ENCODE measurements at regions of chr11 and their contacts with region 1.

Region 1: DNA sequence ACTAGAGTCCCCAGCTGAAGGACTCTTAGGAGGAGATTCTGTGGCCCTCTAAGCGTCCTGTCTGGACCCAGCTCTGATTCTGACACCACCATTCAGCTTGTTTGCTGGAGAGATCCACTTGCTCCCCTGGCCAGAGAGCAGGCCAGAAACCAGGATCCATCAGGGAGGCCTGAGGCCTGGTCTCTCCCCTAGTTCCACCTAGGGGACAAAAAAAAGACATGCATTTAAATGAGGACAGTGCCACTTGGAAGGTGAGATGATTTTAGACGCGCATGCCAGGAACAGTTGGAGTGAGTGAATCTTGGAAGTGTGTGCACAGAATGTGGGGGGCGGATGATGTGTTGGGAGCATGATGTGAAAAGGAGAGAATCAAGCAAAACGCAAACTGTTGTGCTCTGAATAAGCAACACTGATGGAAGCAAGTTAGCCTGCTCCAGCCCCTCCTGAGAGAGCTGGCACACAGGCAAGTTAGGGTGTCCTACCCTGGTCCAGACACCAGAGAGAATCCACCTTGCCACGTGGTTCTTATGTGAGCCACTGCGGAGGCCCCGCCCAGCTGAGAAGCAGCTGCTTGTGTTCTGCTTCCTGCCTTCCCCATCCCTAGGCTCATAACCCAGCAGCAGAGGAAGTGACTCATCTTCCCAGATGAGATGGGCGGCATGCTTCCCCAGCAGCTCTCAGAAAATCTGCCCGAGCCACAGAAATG is 8.0 kb upstream of the SLCO2B1 start:
- DNase-seq: peak in 8 of 9 experiments; percentile 58 to 87 (median 76)
- ATAC-seq: peak; percentile 89
- H3K4me3 ChIP-seq: no peak overlapping the region
- H3K4me3 Mint-ChIP-seq: peak overlapping the region; percentile 41
- H3K27ac ChIP-seq: peak overlapping the region in 1 of 2 experiments; percentile 43
- H3K27ac Mint-ChIP-seq: peak overlapping the region; percentile 79
- H3K4me1 ChIP-seq: peaks cover 30% of the 10 kb centered on the region
- H3K4me1 Mint-ChIP-seq: peaks cover 36% of the 10 kb centered on the region
- H3K27me3 ChIP-seq: no peaks in the 10 kb centered on the region
- H3K27me3 Mint-ChIP-seq: no peaks in the 10 kb centered on the region
- CTCF ChIP-seq: no peak

Region 2: DNA sequence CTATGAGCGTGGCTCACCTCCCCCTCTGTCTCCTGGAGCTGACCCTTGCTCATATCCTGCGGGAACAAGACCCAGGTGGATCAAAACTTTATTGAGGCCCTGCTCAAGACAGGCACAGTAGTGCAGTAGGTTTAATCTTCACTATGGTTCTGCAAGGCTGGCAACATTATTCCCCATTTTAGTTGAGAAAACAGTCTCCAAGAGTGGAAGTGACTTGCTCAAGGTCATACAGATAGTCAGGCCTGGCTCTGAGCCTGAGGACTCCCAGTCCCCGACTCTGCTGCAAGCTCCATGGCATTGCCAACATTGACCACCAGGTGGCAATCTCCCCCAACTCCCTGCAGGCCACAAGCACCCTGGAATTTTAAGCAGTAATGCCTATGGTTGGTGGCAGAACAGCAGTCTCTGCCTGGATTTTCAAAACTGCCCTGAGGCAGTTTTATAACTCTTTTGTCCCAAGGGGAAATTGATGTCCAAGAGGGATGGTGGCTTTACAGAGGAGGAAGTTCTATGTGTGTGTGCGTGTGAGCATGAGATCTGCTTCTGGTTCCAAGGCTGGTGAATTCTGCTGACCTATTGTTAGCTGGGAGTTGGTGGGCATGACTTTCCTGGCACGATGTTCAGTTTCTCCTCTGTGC is 120.0 kb before region 1 on chr11:
- CTCF ChIA-PET with region 1: interaction called, 9 read pairs
- POLR2A ChIA-PET with region 1: no interaction called
- intact Hi-C with region 1: loop called in 1 of 2 experiments (anchors 1 kb)
- DNase-seq: peak; percentile 55 to 82 (median 71)
- ATAC-seq: peak; percentile 87
- H3K4me3 ChIP-seq: no peak overlapping the region
- H3K4me3 Mint-ChIP-seq: no peak overlapping the region
- H3K27ac ChIP-seq: no peak overlapping the region
- H3K27ac Mint-ChIP-seq: no peak overlapping the region
- H3K4me1 ChIP-seq: no peaks in the 10 kb centered on the region
- H3K4me1 Mint-ChIP-seq: no peaks in the 10 kb centered on the region
- H3K27me3 ChIP-seq: no peaks in the 10 kb centered on the region
- H3K27me3 Mint-ChIP-seq: no peaks in the 10 kb centered on the region
- CTCF ChIP-seq: peak; percentile 95

Region 3: GRCh38 chr11:75100314-75100713 is 42.6 kb before region 1 on chr11:
- CTCF ChIA-PET with region 1: no interaction called
- POLR2A ChIA-PET with region 1: no interaction called
- intact Hi-C with region 1: no loop called
- DNase-seq: peak in 1 of 9 experiments; percentile 13
- ATAC-seq: no peak
- H3K4me3 ChIP-seq: no peak overlapping the region
- H3K4me3 Mint-ChIP-seq: no peak overlapping the region
- H3K27ac ChIP-seq: no peak overlapping the region
- H3K27ac Mint-ChIP-seq: no peak overlapping the region
- H3K4me1 ChIP-seq: no peaks in the 10 kb centered on the region
- H3K4me1 Mint-ChIP-seq: no peaks in the 10 kb centered on the region
- H3K27me3 ChIP-seq: no peaks in the 10 kb centered on the region
- H3K27me3 Mint-ChIP-seq: peaks cover 41% of the 10 kb centered on the region
- CTCF ChIP-seq: no peak

Region 4: DNA sequence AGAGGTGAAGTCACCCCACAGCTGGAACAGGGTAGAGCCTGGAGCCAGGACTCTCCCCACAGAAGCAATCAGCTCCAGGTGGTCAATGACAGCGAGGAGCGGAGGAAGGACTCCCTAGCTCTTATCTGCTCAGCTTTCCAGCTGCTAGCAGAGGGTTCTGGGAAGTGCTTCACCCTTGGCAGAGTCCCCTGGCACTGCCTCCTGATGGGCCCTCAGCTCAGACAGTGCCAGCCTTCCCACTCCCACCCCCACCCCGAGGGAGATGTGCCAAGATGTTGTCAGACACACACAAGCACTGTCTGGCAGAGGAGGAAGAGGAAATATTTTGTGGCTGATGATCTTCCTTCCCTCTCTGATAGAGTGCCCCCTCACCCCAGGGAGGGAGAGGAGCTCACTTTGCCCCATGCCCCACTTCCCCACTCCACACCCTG is 52.3 kb after region 1 on chr11:
- CTCF ChIA-PET with region 1: interaction called, 11 read pairs
- POLR2A ChIA-PET with region 1: no interaction called
- intact Hi-C with region 1: no loop called
- DNase-seq: no peak
- ATAC-seq: no peak
- H3K4me3 ChIP-seq: no peak overlapping the region
- H3K4me3 Mint-ChIP-seq: no peak overlapping the region
- H3K27ac ChIP-seq: no peak overlapping the region
- H3K27ac Mint-ChIP-seq: no peak overlapping the region
- H3K4me1 ChIP-seq: no peaks in the 10 kb centered on the region
- H3K4me1 Mint-ChIP-seq: no peaks in the 10 kb centered on the region
- H3K27me3 ChIP-seq: peaks cover 0 to 3% of the 10 kb centered on the region in 2 experiments
- H3K27me3 Mint-ChIP-seq: peaks cover 3% of the 10 kb centered on the region
- CTCF ChIP-seq: no peak

Region 5: DNA sequence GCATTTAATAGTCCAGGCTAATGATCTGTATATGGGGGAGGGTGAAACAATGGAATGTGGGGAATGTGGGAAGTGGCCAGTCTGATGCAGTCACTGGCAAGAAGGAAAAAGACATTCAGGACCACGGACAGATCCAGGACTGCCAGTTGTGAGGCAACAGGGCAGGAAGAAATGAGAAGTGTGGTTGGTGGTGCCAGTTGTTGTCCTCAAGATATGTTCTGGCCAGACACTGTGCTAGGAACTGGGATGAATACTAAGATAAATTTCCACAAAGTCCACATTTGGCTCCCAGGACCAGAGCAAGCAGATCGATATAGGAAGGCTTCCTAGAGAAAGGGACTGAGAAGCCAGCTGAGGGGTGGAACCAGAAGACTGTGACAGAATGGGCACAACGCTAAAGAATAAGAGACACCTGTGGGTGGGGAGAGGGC is 90.9 kb after region 1 on chr11:
- CTCF ChIA-PET with region 1: interaction called, 625 read pairs
- POLR2A ChIA-PET with region 1: no interaction called
- intact Hi-C with region 1: no loop called
- DNase-seq: peak in 4 of 9 experiments; percentile 20 to 42 (median 34)
- ATAC-seq: no peak
- H3K4me3 ChIP-seq: no peak overlapping the region
- H3K4me3 Mint-ChIP-seq: no peak overlapping the region
- H3K27ac ChIP-seq: no peak overlapping the region
- H3K27ac Mint-ChIP-seq: no peak overlapping the region
- H3K4me1 ChIP-seq: no peaks in the 10 kb centered on the region
- H3K4me1 Mint-ChIP-seq: no peaks in the 10 kb centered on the region
- H3K27me3 ChIP-seq: no peaks in the 10 kb centered on the region
- H3K27me3 Mint-ChIP-seq: peaks cover 40% of the 10 kb centered on the region
- CTCF ChIP-seq: no peak

Region 6: DNA sequence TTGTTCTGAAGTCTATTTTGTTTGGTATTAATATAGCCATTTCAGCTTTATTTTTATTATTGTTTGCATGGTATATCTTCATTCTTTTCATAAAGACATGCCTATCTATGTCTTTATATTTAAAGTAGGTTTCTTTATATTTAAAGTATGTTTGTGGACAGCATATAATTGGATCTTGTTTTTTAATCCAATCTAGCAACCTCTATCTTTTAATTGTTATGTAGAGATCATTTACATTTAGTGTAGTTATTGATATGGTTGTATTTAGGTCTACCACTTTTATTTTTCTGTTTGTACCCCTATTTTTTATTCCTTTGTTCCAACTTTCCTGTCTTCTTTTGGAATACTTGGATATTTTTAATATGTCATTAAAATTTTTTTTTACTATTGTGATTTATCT is 111.5 kb after region 1 on chr11:
- CTCF ChIA-PET with region 1: interaction called, 625 read pairs
- POLR2A ChIA-PET with region 1: interaction called, 4 read pairs
- intact Hi-C with region 1: no loop called
- DNase-seq: no peak
- ATAC-seq: no peak
- H3K4me3 ChIP-seq: no peak overlapping the region
- H3K4me3 Mint-ChIP-seq: no peak overlapping the region
- H3K27ac ChIP-seq: no peak overlapping the region
- H3K27ac Mint-ChIP-seq: no peak overlapping the region
- H3K4me1 ChIP-seq: peaks cover 6% of the 10 kb centered on the region
- H3K4me1 Mint-ChIP-seq: peaks cover 7% of the 10 kb centered on the region
- H3K27me3 ChIP-seq: peaks cover 0 to 4% of the 10 kb centered on the region in 2 experiments
- H3K27me3 Mint-ChIP-seq: peaks cover 2% of the 10 kb centered on the region
- CTCF ChIP-seq: no peak

Region 7: DNA sequence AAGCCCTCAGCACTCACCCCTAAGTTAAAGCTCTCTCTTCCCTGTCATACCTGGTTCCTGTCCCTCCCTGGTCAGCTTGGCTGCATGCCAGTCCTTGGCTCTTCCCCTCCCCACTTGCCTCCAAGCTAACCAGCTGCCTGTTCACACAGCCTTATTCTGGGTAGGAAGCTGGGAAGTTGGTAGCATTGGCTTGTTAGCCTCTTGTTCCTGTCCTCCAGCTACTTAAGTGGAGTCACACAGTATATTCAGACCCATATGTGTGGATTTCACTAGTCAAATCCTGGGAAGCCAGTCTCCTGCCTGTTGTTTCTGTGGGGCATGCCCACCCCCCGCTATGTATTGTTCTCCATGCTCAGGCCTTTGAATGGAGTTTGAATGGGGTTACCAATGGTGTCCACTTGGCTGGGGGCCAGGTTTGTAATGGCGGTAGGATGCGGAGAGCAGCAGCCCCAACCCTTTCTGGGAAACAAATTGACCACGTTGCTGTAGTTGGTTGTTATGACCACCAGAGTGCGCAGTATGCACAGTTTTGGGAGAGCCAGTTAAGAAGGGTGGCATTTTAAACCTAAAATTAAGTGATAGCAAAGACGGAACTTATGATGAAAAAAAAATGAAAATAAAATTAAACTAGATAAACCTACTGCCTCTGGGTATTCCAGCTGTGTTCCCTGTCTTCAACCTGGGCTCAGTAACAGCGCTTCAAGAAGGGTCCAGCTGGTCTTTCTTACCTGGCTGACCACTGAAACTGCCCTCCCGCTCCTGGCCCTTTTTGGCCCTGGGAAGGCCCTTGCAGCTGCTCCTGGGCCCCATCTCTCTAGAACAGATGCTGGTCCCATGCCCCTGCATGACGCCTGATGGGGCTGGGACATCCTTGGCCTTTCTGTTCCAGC is 245.8 kb after region 1 on chr11:
- CTCF ChIA-PET with region 1: interaction called, 11 read pairs
- POLR2A ChIA-PET with region 1: no interaction called
- intact Hi-C with region 1: loop called (anchors 2 to 5 kb)
- DNase-seq: peak; percentile 39 to 87 (median 64)
- ATAC-seq: peak; percentile 93
- H3K4me3 ChIP-seq: no peak overlapping the region
- H3K4me3 Mint-ChIP-seq: no peak overlapping the region
- H3K27ac ChIP-seq: no peak overlapping the region
- H3K27ac Mint-ChIP-seq: no peak overlapping the region
- H3K4me1 ChIP-seq: peaks cover 15% of the 10 kb centered on the region
- H3K4me1 Mint-ChIP-seq: peaks cover 11% of the 10 kb centered on the region
- H3K27me3 ChIP-seq: no peaks in the 10 kb centered on the region
- H3K27me3 Mint-ChIP-seq: no peaks in the 10 kb centered on the region
- CTCF ChIP-seq: peak; percentile 81